Right ventricle myocardium inferior (tissue), 1 donor: ENCODE measurements at regions of chr15 and their contacts with region 1.

Region 1: DNA sequence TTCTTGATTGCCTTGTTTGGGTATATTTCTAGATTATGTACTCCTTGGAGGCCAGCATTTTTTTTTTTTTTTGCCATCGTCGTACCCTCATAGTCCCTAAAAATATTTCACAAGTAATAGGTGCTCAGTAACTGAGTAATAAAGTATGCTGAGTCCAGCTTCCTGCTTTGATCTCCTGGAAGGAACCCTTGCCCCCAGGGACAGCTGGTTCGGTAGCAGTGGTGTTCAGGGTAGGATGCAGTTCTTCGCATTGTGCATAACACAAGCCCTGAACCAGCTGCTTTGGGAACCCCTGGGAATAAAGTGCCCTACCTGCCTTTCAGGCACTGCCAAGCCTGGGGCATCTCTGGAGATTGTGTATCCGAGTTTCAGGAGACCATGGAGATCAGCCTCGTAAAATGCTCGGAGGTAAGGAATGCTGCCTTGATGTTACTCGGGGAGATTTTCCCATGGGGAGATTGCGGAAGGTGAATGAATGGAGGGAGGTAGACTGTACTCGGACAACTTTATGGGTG is 7.6 kb downstream of the MYZAP start:
- DNase-seq: no peak
- ATAC-seq: no peak

Region 2: DNA sequence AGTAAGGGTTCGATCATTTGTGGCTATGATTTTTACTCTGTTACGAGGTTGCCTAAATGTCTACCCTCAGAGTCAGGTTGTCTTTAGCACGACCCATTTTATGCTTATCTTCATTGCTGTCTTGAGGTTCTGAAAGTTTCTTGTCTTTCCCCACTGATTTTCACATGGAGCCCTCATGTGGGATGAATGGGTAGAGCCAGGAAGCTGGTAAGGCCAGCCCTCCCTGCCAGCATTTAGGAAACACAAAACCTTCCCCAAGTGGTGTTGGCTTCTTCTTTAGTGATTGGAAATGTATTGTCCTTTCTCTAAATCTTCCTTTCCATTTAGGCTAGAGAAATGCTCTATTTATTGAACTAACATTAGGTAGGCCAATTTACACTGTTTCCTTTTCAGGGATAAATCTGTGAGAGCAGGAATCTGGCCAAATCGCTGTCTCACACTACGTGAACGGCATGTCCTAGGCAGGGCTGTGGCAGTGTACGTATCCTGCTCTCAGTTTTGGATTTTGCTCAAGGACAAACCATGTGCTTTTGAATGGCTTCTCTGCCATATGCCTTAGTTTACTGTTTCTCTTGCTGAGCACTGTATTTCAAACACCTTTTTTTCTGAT is 36.1 kb after region 1 on chr15:
- intact Hi-C with region 1: loop called (anchors 2 kb)
- DNase-seq: no peak
- ATAC-seq: peak; percentile 85

Region 3: DNA sequence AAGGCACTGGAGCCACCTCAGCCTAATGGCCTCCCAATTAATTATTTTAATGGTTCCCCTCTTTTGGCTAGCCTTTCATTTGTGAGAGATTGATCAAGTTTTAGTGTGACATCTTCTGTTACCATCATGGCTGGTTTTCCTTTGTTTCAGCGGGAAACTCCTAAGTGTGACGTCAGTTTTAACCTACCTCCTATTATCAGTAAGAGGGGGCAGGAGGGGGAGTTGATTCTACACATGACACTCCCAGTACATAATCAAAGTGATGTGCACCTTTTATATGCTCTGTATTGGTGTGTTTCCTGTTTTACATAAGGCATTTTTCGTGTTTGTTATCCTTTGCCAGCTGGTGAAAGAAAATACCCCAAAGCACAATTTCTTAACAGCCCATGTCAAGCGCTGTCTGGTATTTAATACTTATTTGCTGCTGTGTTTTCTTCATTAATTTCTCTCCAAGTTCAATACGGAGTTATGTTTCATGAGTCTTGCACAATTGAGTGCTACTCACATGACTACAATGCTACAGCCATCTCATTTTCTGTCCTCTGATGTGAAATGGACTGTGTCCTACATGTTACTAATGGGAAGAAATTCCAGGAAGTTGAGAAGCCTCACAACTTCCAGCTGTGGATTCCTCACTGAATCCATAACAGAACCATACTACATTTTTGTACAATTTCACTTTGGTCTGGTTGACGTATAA is 55.0 kb after region 1 on chr15:
- intact Hi-C with region 1: no loop called
- DNase-seq: no peak
- ATAC-seq: no peak